ENCODE measurements at regions of chr19 and their contacts with region 1.

Region 1: DNA sequence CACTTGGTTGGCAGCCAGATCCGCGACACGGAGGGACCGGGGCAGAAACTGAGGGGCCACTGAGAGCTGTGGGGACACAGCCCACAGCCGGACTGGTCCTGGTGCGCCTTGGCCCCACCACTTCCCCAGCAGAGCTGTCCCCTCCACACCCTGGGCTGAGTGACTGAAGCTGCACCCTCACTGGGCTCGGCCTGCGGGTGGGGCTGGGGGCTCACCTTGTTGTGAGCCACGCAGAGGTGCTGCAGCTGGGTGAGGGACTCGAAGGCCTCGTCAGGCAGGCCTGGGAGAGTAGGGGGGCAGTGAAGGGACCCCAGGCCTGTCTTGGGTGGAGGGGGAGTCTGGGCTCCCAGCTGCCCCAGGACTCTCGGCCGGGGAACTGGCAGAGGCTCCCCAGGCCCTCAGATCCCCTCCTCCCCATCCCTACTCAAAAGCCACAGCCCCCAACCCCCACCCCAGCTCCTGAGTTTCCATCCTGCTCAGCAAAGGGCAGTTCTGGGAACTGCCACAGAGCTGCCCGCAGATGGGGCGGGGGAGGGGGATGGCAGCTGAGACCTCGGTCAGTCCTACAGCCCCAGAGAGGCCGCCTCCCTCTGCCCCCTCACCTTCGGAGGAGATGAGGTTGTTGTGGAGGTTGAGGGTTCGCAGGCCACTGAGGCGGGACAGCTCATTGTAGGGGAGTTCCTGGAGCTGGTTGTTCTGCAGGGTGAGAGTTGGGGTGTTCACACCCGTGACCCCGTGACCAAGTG is 2.3 kb downstream of the PODNL1 start:
- DNase-seq: no peak
- ATAC-seq: no peak
- H3K4me3 ChIP-seq: no peak overlapping the region
- H3K4me3 Mint-ChIP-seq: no peak overlapping the region
- H3K27ac ChIP-seq: no peak overlapping the region
- H3K27ac Mint-ChIP-seq: no peak overlapping the region
- H3K4me1 ChIP-seq: peaks cover 0 to 4% of the 10 kb centered on the region in 2 experiments
- H3K4me1 Mint-ChIP-seq: peaks cover 0 to 11% (median 9%) of the 10 kb centered on the region in 3 donors
- H3K27me3 ChIP-seq: peaks cover 0 to 37% of the 10 kb centered on the region in 2 experiments
- H3K27me3 Mint-ChIP-seq: peaks cover 4 to 17% of the 10 kb centered on the region in 2 donors

Region 2: DNA sequence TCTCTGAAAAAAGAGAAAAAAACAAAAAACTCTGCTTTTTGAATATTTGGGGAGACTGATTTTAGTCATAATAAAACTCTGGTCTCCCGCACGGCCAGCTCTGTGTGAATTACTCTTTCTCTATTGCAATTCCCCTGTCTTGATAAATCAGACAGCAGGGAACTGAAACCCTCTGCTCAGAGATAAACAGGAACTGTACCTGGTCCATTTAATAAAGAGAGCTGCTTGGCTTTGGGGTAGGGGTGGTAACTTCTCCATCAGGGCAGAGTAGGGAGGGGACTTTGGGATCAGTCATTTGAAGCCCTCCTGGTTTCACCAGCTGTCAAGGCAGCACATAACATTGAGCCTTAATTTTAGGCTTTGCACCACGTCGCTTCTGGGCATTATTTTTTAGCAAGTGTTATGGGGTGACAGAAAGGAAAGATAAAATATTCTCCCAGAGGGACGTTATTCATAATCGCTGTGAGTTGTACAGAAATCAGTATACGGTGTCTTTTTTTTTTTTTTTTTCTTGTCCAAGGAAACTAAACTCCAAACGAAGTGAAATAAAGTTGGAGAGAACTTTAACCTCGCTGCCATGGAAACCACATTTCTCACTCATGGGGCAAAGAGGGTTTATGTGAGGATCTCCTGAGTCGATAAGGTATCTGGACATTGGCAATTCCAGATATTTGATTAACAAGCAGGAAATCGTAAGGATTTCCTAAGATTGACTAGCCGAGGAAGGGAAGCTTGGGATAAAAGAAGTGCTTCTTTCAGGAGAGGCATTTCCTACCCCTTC is 270.6 kb before region 1 on chr19:
- CTCF ChIA-PET with region 1: no interaction called
- POLR2A ChIA-PET with region 1: no interaction called
- DNase-seq: no peak
- ATAC-seq: no peak
- H3K4me3 ChIP-seq: no peak overlapping the region
- H3K4me3 Mint-ChIP-seq: no peak overlapping the region
- H3K27ac ChIP-seq: no peak overlapping the region
- H3K27ac Mint-ChIP-seq: no peak overlapping the region
- H3K4me1 ChIP-seq: no peaks in the 10 kb centered on the region
- H3K4me1 Mint-ChIP-seq: no peaks in the 10 kb centered on the region
- H3K27me3 ChIP-seq: peaks cover 0 to 5% of the 10 kb centered on the region in 2 experiments
- H3K27me3 Mint-ChIP-seq: no peaks in the 10 kb centered on the region

Region 3: DNA sequence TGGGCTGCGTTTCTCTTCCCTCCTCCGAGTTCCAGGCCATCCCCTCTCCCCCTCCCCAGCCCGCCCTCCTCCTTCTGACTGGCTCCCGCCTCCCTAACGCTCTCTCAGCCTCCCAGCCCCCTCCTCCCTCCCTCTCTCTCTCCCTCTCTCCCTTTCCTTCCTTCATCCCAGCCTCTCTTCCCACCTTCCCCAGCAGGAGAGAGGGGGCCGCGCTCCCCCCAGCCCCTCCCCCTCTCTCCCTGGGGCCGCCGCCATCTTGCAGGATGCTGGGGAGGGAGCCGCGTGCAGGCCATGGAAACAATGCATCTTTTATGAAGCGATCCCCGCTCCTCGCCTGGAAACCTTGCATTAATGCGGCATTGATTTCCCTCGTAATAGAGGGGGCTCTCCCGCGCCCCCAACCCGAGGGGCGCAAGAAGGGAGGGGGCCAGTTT is 312.7 kb after region 1 on chr19:
- CTCF ChIA-PET with region 1: no interaction called
- POLR2A ChIA-PET with region 1: interaction called in 1 of 2 experiments, 10 read pairs
- DNase-seq: peak in 27 of 35 experiments; percentile 1 to 55 (median 27)
- ATAC-seq: peak; percentile 71 to 83 (median 80)
- H3K4me3 ChIP-seq: peak overlapping the region in 1 of 2 donors; percentile 60
- H3K4me3 Mint-ChIP-seq: peak overlapping the region; percentile 60 to 73 (median 62)
- H3K27ac ChIP-seq: peak overlapping the region; percentile 44
- H3K27ac Mint-ChIP-seq: peak overlapping the region in 1 of 2 donors; percentile 22
- H3K4me1 ChIP-seq: peaks cover 0 to 24% of the 10 kb centered on the region in 2 experiments
- H3K4me1 Mint-ChIP-seq: peaks cover 4 to 18% (median 6%) of the 10 kb centered on the region in 3 donors
- H3K27me3 ChIP-seq: peaks cover 0 to 4% of the 10 kb centered on the region in 2 experiments
- H3K27me3 Mint-ChIP-seq: peaks cover 0 to 2% of the 10 kb centered on the region in 2 donors

Measured in T-cell (primary cell).